ENCODE measurements at regions of chr1 and their contacts with region 1.

Region 1: GRCh38 chr1:28642847-28643635 is at the start of gene TAF12:
- DNase-seq: peak; percentile 85
- H3K4me3 Mint-ChIP-seq: peak within 1 kb of the TSS; percentile 99
- H3K27ac Mint-ChIP-seq: peak within 1 kb of the TSS; percentile 99
- H3K4me1 Mint-ChIP-seq: peaks cover 55% of the 10 kb centered on the region
- H3K27me3 Mint-ChIP-seq: no peaks in the 10 kb centered on the region
- total RNA-seq, gene TAF12: 32.8 and 33.9 TPM in 2 replicates

Region 2: GRCh38 chr1:28369371-28370238 is 273.4 kb before region 1 on chr1 and contains the start of gene PHACTR4:
- intact Hi-C with region 1: loop called (anchors 1 kb)
- DNase-seq: peak; percentile 78
- H3K4me3 Mint-ChIP-seq: peak within 1 kb of the TSS; percentile 91
- H3K27ac Mint-ChIP-seq: peak within 1 kb of the TSS; percentile 95
- H3K4me1 Mint-ChIP-seq: peaks cover 36% of the 10 kb centered on the region
- H3K27me3 Mint-ChIP-seq: peaks cover 3% of the 10 kb centered on the region
- total RNA-seq, gene PHACTR4: 28.9 and 31.8 TPM in 2 replicates

Region 3: DNA sequence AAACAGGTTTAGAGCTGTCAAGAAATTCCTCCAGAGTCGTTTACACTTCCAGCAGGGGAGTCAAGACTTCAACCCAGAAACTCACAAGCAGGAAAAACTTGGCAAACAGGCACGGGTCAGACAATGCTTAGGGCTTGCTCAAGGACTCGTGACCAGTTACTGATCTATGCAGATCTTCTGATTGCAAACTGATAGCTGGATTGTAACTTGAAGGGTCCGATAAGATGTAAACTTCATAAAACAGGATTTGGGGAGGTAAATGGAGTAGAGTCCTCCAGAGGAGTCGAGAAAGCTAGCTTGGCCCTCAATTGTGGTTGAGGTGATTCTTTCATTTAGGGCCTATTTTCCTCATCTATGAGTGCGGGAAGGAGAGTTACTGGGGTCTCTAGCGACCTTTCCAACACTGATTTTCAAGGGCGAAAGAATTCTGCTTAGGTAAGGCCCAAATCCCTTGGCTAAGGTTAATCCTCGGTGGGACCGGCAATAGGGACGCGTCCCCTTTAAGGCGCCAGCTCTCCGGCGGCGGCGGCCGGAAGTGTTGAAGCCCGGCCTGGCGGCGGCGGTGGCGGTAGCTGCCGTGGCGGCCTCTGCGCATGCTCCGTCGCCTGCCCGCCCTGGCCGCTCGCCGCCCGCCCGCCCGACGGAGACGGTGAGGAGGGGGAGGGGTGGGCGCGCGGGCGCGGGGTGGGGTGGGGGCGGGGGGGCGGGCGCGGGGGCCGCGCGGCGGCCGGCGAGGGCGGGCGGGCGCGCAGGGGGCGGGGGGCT is 25.3 kb after region 1 on chr1 and contains the start of gene GMEB1:
- intact Hi-C with region 1: loop called (anchors 1 kb)
- DNase-seq: peak; percentile 87
- H3K4me3 Mint-ChIP-seq: peak within 1 kb of the TSS; percentile 90
- H3K27ac Mint-ChIP-seq: peak within 1 kb of the TSS; percentile 98
- H3K4me1 Mint-ChIP-seq: peaks cover 11% of the 10 kb centered on the region
- H3K27me3 Mint-ChIP-seq: no peaks in the 10 kb centered on the region
- total RNA-seq, gene GMEB1: 27.2 and 30.3 TPM in 2 replicates

Region 4: DNA sequence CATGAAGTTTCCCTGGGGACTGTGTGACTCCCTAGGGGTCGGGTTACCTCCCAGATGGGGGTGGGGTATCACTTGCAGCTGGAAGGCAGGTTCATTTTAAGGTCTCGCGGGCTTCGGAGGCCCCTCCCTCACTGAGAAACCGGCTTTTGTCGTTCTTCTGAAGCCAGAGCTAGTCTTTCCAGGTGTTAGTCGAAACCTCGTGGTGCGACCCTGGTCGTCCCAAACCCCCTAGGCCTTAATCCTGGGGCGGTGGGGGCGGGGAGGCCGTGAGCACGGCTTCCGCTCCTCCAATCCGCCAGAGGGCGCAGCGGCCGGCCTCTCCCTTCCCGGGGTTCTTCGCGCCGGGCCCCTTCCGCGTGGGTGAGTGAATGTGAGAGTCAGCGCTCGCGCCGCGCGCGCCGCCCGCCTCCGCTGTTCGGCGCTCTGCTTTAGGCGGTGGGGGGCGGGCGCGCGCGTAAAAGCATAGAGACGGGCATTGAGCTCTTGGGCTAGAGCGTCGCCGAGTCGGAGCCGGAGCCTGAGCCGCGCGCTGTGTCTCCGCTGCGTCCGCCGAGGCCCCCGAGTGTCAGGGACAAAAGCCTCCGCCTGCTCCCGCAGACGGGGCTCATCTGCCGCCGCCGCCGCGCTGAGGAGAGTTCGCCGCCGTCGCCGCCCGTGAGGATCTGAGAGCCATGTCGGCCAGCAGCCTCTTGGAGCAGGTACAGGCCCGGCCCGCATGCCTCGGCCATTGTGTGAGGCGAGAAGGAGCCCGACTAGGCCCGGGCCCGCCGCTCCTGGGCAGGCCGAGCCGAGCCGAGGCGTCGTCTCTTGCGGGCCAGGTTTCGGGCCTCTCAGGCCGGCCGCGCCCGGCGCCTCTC is 93.6 kb after region 1 on chr1 and contains the start of gene YTHDF2:
- intact Hi-C with region 1: loop called (anchors 1 kb)
- DNase-seq: peak; percentile 96
- H3K4me3 Mint-ChIP-seq: peak within 1 kb of the TSS; percentile 96
- H3K27ac Mint-ChIP-seq: peak within 1 kb of the TSS; percentile 93
- H3K4me1 Mint-ChIP-seq: peaks cover 27% of the 10 kb centered on the region
- H3K27me3 Mint-ChIP-seq: no peaks in the 10 kb centered on the region
- total RNA-seq, gene YTHDF2: 91.7 and 94.9 TPM in 2 replicates

Region 5: GRCh38 chr1:28877132-28877781 is 234.2 kb after region 1 on chr1:
- intact Hi-C with region 1: loop called (anchors 2 kb)
- DNase-seq: peak; percentile 54
- H3K4me3 Mint-ChIP-seq: no peak overlapping the region
- H3K27ac Mint-ChIP-seq: no peak overlapping the region
- H3K4me1 Mint-ChIP-seq: peaks cover 11% of the 10 kb centered on the region
- H3K27me3 Mint-ChIP-seq: peaks cover 5% of the 10 kb centered on the region